Right ventricle myocardium superior (tissue), 1 donor: ENCODE measurements at regions of chr2 and their contacts with region 1.

Region 1: DNA sequence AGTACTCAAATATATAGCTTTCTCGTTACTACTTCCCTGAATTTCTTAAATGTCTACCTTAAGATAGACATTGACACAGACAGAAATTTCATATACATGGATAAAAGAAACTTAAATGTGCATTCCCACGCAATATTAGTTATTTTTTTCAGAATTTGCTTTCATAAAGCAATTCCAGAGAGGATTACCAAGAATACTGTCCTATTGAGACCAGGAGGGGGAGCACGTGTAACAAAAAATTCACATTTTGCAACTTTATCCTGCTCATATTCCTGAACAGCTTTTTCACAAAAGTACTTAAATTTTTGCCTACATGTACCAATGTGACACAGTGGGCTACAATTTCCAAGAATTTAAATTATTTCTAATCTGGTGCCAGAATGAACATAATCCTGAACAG is 30.7 kb upstream of the ERCC3 start:
- DNase-seq: no peak
- ATAC-seq: peak; percentile 46

Region 2: DNA sequence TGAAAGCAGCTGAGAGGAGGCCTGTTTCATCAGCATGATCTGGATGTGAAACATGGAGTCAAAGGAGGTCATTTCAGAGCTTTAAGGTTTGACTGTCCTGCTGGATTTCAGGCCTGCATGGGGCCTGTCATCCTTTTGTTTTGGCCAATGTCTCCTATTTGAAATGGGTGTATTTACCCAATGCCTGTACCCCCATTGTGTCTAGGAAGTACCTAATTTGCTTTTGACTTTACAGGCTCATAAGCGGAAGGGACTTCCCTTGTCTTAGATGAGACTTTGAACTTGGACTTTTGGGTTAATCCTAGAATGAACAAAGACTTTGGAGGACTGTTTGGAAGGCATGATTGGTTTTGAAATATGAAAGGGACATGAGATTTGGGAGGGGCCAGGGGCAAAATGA is 85.2 kb before region 1 on chr2:
- intact Hi-C with region 1: no loop called
- DNase-seq: no peak
- ATAC-seq: no peak

Region 3: GRCh38 chr2:127422810-127423475 is 98.3 kb after region 1 on chr2:
- intact Hi-C with region 1: no loop called
- DNase-seq: no peak
- ATAC-seq: peak; percentile 11

Region 4: DNA sequence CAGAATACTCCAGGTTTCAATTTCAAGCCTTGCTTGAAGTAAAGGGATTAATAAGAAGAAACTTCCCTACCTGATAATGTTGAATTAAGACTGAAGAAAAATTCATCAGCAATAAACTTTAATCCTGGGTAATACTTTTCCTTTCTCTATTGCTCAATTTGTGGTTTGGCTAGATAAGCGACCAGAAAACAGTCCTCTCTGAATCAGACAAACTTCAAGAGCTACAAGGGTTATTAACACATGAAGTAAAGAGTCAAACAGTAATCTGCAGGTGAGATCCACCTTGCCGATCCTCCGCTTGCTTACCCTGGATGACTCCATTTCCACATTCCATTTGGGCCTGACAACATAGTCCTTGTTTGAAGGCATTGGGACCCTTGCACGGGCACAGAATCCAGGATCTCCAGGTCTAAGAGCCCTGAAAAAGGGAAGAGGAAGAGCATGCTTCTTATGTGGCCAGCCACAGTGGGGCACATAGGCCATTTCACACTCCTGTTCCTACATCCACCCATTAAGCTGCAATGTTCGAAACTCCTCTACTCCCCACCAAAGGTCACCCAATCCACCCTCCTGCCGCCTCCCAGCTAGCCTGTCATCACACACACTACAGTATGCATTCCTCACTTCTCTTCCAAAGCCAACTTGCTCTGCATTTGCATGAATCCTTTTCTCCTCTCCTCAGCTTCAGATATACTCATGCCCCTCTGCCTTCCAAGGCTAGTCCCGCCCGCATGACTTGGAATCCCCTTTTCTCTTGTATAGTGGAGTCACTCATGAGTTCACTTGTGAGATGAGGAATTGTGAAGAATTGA is 161.8 kb after region 1 on chr2:
- intact Hi-C with region 1: loop called (anchors 5 kb)
- DNase-seq: no peak
- ATAC-seq: no peak